ENCODE measurements at regions of chr16 and their contacts with region 1.

Region 1: GRCh38 chr16:89860747-89861304 is 12.6 kb upstream of the TCF25 start:
- DNase-seq: peak; percentile 57
- H3K4me3 ChIP-seq: no peak overlapping the region
- H3K27ac ChIP-seq: no peak overlapping the region
- H3K4me1 ChIP-seq: peaks cover 16% of the 10 kb centered on the region
- H3K27me3 ChIP-seq: no peaks in the 10 kb centered on the region
- CTCF ChIP-seq: peak; percentile 94 to 99
- POLR2A ChIP-seq: no peak

Region 2: GRCh38 chr16:89706507-89707263 is 154.1 kb before region 1 on chr16:
- CTCF ChIA-PET with region 1: interaction called, 90 read pairs
- POLR2A ChIA-PET with region 1: no interaction called
- dilution Hi-C with region 1: no loop called
- intact Hi-C with region 1: loop called (anchors 1 kb)
- DNase-seq: no peak
- H3K4me3 ChIP-seq: no peak overlapping the region
- H3K27ac ChIP-seq: no peak overlapping the region
- H3K4me1 ChIP-seq: no peaks in the 10 kb centered on the region
- H3K27me3 ChIP-seq: no peaks in the 10 kb centered on the region
- CTCF ChIP-seq: no peak
- POLR2A ChIP-seq: no peak

Region 3: DNA sequence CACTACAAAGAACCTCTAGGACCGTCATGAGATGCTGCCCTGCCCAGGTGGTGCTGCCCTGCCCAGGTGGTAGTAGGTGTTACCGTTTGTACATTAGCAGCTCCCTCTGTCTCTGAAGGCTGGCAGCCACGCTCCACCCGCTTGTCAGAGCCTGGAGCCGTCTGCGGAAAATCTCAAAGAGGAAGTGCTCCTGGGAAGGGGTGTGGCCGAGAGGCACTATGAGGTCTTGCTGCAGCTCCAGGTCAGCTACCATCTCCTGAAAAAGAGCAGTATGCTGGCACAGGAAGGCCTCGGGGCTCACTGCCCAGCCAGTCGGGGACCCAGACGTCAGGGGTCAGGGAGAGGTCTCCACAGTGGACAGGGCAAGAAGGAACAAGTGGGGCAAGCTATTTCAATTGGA is 111.2 kb before region 1 on chr16:
- CTCF ChIA-PET with region 1: interaction called, 16 read pairs
- POLR2A ChIA-PET with region 1: no interaction called
- dilution Hi-C with region 1: no loop called
- intact Hi-C with region 1: loop called (anchors 5 kb)
- DNase-seq: no peak
- H3K4me3 ChIP-seq: no peak overlapping the region
- H3K27ac ChIP-seq: no peak overlapping the region
- H3K4me1 ChIP-seq: no peaks in the 10 kb centered on the region
- H3K27me3 ChIP-seq: no peaks in the 10 kb centered on the region
- CTCF ChIP-seq: no peak
- POLR2A ChIP-seq: no peak

Region 4: GRCh38 chr16:89801800-89802199 is 59.0 kb before region 1 on chr16:
- CTCF ChIA-PET with region 1: interaction called, 10 read pairs
- POLR2A ChIA-PET with region 1: no interaction called
- dilution Hi-C with region 1: no loop called
- intact Hi-C with region 1: no loop called
- DNase-seq: peak; percentile 64
- H3K4me3 ChIP-seq: no peak overlapping the region
- H3K27ac ChIP-seq: no peak overlapping the region
- H3K4me1 ChIP-seq: no peaks in the 10 kb centered on the region
- H3K27me3 ChIP-seq: no peaks in the 10 kb centered on the region
- CTCF ChIP-seq: no peak
- POLR2A ChIP-seq: no peak

Region 5: DNA sequence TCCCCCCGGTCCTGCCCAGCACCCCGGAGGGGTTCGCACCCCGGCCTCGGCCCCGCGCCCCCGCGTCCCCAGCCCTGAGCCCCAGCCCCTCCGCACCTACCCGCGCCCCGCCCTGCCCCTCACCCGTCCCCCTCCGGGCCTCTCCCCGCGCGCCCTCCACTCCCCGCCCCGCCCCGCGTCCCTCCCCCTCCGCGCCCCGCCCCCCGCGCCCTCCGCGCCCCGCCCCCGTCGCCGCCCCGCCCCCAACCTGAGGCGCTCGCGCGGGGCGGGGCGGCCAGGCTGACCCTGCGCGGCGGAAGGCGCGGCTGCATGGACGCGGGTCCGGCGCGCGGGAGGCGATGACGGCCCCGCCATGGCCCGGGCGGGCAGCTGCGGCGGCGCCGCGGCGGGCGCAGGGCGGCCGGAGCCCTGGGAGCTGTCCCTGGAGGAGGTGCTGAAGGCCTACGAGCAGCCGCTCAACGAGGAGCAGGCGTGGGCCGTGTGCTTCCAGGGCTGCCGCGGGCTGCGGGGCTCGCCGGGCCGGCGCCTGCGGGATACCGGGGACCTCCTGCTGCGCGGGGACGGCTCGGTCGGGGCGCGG is 32.5 kb before region 1 on chr16 and contains the start of gene SPIRE2:
- CTCF ChIA-PET with region 1: interaction called, 17 read pairs
- POLR2A ChIA-PET with region 1: no interaction called
- dilution Hi-C with region 1: no loop called
- intact Hi-C with region 1: no loop called
- DNase-seq: peak; percentile 77
- H3K4me3 ChIP-seq: peak within 1 kb of the TSS; percentile 50 to 64 (median 60)
- H3K27ac ChIP-seq: no peak within 1 kb of the TSS
- H3K4me1 ChIP-seq: peaks cover 9% of the 10 kb centered on the region
- H3K27me3 ChIP-seq: no peaks in the 10 kb centered on the region
- CTCF ChIP-seq: no peak
- POLR2A ChIP-seq: no peak
- total RNA-seq, gene SPIRE2: 2.4 and 3.1 TPM in 2 replicates

Region 6: GRCh38 chr16:89873972-89874689 is 13.3 kb after region 1 on chr16:
- CTCF ChIA-PET with region 1: interaction called, 20 read pairs
- POLR2A ChIA-PET with region 1: interaction called, 5 read pairs
- dilution Hi-C with region 1: no loop called
- intact Hi-C with region 1: loop called (anchors 1 kb)
- DNase-seq: peak; percentile 96
- H3K4me3 ChIP-seq: peak overlapping the region; percentile 76 to 85 (median 76)
- H3K27ac ChIP-seq: no peak overlapping the region
- H3K4me1 ChIP-seq: peaks cover 8% of the 10 kb centered on the region
- H3K27me3 ChIP-seq: no peaks in the 10 kb centered on the region
- CTCF ChIP-seq: no peak
- POLR2A ChIP-seq: no peak

Region 7: GRCh38 chr16:89981414-89981813 is 120.6 kb after region 1 on chr16:
- CTCF ChIA-PET with region 1: no interaction called
- POLR2A ChIA-PET with region 1: no interaction called
- dilution Hi-C with region 1: no loop called
- intact Hi-C with region 1: no loop called
- DNase-seq: no peak
- H3K4me3 ChIP-seq: no peak overlapping the region
- H3K27ac ChIP-seq: no peak overlapping the region
- H3K4me1 ChIP-seq: no peaks in the 10 kb centered on the region
- H3K27me3 ChIP-seq: no peaks in the 10 kb centered on the region
- CTCF ChIP-seq: no peak
- POLR2A ChIP-seq: no peak

Region 8: GRCh38 chr16:90046971-90047713 is 186.3 kb after region 1 on chr16:
- CTCF ChIA-PET with region 1: no interaction called
- POLR2A ChIA-PET with region 1: no interaction called
- dilution Hi-C with region 1: no loop called
- intact Hi-C with region 1: no loop called
- DNase-seq: peak; percentile 38
- H3K4me3 ChIP-seq: peak overlapping the region in 1 of 3 experiments; percentile 29
- H3K27ac ChIP-seq: no peak overlapping the region
- H3K4me1 ChIP-seq: peaks cover 8% of the 10 kb centered on the region
- H3K27me3 ChIP-seq: peaks cover 0 to 2% of the 10 kb centered on the region in 2 experiments
- CTCF ChIP-seq: no peak
- POLR2A ChIP-seq: no peak